Cardiac septum (tissue), 1 donor: ENCODE measurements at regions of chr15 and their contacts with region 1.

Region 1: DNA sequence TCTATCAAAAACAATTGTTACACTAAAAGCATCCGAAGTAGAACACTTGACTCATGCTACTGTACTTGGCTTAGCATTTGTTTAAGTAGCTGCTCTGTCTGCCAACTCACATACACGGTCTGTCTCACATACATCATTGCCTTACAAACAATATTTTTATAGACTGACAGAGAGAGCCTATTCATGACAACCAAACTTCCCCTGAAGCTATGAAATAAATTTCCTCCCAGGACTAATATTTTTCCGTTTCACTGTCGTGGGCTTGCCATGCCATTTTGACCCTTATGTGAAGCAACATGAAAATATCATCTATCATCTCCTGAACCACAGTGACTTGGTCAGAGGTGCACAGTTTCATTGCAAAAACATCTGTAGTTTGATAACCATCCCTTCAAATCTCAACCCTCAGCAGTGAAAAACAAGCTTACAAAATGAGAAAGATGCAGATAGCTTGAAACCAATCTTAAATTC is 66.5 kb upstream of the PYGO1 start:
- DNase-seq: no peak

Region 2: GRCh38 chr15:55799291-55800212 is 145.0 kb after region 1 on chr15:
- intact Hi-C with region 1: loop called (anchors 10 kb)
- DNase-seq: no peak